Dendritic cell treated with granulocyte-macrophage colony-stimulating factor and Interleukin-4, amounts not matched to agents 40 ng/mL and 50 ng/mL, for 4 days (primary cell): ENCODE measurements at regions of chr10 and their contacts with region 1.

Region 1: GRCh38 chr10:103888113-103888841 is 29.7 kb downstream of the STN1 start:
- H3K4me3 Mint-ChIP-seq: no peak overlapping the region
- H3K27ac Mint-ChIP-seq: no peak overlapping the region
- H3K4me1 Mint-ChIP-seq: peaks cover 26% of the 10 kb centered on the region
- H3K27me3 Mint-ChIP-seq: no peaks in the 10 kb centered on the region

Region 2: DNA sequence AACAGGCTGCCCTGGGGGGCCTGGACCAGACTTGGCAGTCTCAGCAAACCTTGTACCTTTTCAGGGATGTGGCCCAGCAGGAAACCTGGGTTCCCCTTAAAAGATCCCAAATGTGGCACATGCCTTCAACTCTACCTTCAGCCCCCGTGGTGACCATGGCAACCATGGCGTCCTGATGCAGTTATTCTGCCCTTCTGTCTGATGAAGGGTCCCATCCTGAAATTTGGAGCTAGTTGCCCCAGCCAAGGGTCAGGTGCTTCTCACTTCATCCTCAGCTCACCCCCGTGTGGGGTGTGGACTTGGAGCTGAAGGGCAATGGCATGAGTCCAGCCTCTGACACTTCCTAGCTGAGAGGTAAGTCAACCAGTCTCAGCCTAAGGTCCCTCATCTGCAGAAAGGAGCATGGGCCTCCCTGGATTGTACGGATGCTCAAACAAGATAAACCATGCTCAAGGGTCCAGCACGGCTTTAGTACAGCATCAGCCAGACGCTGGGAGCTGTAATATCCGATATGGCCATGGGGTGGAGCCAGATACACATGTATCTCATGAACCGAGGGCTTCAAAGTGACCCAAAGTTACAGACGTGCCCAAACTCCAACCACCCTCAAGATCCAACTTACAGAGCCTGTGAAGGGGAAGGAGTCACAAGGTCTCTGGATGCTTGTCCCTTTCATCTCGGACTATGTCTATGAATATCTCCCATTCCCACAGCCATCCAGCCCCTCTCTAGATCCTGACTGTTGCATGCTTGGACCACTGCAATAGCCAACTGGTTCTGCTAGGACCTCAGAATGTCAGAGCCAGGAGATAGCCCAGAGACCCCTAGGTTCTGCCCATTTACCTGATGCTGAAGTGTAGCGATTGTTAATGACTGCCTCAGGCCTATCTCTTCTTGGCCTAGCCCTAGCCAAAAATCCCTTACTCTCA is 175.4 kb before region 1 on chr10:
- intact Hi-C with region 1: loop called (anchors 1 kb)
- H3K4me3 Mint-ChIP-seq: no peak overlapping the region
- H3K27ac Mint-ChIP-seq: no peak overlapping the region
- H3K4me1 Mint-ChIP-seq: no peaks in the 10 kb centered on the region
- H3K27me3 Mint-ChIP-seq: peaks cover 5% of the 10 kb centered on the region

Region 3: DNA sequence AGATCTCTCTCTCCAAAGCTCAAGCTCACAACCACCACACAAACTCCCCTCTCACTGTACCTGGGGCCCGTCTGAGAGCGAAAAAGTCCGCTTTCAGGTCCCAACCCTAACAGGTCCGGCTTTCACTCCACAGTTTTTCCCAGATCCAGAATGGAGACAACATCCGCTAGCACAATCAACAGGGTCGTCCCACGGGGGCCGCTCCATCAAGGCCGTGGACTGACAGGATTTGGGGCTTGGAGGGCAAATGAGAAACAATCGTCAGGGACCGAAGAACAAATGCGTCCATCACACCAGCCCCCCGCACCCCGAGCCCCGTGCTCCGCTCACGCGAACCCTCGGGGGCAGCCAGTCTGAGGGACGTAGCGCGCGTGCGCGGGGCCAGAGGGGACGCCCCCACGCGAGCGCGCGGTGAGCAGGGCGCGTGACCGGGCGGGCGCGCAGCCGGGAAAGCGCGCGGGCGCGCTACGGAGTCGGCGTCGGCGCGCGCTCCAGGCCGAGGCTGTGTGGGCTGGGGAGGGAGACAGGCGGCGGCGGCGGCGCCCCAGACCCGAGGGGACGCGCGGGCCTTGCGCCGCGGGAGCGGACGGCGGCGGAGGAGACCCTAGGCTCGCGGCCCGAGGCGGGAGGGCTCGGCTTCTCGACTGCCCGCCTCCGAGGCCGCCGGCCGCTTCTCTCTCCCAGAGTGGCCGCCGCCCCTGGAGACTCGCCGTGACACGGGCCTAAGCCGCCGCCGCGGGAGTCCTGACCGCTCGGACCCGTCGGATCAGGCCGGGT is 78.6 kb after region 1 on chr10 and contains the start of gene SLK:
- intact Hi-C with region 1: loop called (anchors 5 kb)
- H3K4me3 Mint-ChIP-seq: peak within 1 kb of the TSS; percentile 97
- H3K27ac Mint-ChIP-seq: peak within 1 kb of the TSS; percentile 85
- H3K4me1 Mint-ChIP-seq: peaks cover 34% of the 10 kb centered on the region
- H3K27me3 Mint-ChIP-seq: no peaks in the 10 kb centered on the region

Region 4: DNA sequence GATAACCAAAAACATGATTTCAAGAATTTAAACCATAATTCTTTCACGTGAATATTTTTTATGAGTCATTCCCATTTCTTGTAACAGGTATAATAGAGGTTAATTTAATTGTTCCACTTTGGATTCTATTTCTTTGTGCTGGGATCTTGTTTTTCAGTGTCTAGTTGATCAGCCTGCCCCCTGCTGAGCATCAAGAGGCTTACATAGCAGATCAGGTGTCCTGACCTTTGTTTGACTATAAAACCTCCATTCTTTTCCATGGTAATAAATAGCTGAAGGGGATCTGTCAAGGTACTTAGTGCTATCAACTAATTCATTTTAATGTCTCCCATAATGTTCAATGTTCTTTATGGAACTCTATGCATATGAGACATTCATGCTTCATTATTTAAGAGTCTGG is 192.5 kb after region 1 on chr10:
- intact Hi-C with region 1: loop called (anchors 5 kb)
- H3K4me3 Mint-ChIP-seq: no peak overlapping the region
- H3K27ac Mint-ChIP-seq: no peak overlapping the region
- H3K4me1 Mint-ChIP-seq: no peaks in the 10 kb centered on the region
- H3K27me3 Mint-ChIP-seq: no peaks in the 10 kb centered on the region

Region 5: GRCh38 chr10:104209575-104210198 is 321.4 kb after region 1 on chr10:
- intact Hi-C with region 1: loop called (anchors 1 kb)
- H3K4me3 Mint-ChIP-seq: no peak overlapping the region
- H3K27ac Mint-ChIP-seq: no peak overlapping the region
- H3K4me1 Mint-ChIP-seq: peaks cover 15% of the 10 kb centered on the region
- H3K27me3 Mint-ChIP-seq: no peaks in the 10 kb centered on the region